Mammary epithelial cell (primary cell): ENCODE measurements at regions of chr10 and their contacts with region 1.

Region 1: DNA sequence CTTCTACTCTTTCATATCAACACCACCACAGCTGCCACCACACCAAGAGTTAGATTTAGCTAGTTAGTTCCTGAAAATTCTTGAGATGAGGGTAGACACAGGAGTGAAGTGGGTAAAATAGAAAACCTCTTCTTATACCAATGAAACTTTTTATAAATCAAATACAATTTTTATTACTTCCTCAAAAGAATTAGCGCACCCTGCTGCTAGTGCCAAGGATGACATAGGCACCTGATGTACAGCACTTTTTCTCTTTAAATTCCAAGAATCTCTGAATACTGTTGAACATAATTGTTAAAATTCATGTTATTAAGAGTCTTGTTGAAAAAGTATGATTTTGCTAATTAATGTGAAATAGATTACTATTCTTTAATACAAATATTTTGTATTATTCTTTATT is 11.4 kb downstream of the ZWINT start:
- DNase-seq: no peak
- H3K4me3 ChIP-seq: no peak overlapping the region
- H3K27ac ChIP-seq: no peak overlapping the region
- H3K4me1 ChIP-seq: no peaks in the 10 kb centered on the region
- H3K27me3 ChIP-seq: no peaks in the 10 kb centered on the region
- CTCF ChIP-seq: peak; percentile 23 to 58

Region 2: DNA sequence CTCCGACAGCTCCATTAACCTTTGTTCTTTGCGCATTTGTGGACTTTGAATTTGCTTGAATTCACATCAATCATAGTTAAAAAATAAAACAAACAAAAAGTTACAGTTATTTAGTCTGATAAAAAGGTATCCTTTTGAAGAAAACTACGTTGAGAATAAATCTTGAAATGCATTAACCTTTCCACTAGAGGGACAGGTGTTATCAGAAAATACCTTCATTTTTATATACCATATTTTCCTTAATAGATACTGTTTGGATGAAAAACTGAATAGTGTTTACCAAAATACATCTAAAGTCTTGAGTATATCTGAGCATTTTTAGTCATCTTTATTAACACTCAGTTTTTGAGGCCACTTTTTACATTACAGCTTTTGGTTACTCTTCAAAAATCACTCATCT is 360.4 kb before region 1 on chr10:
- CTCF ChIA-PET with region 1: no interaction called
- dilution Hi-C with region 1: no loop called
- in situ Hi-C with region 1: no loop called
- intact Hi-C with region 1: loop called (anchors 10 kb)
- DNase-seq: no peak
- H3K4me3 ChIP-seq: no peak overlapping the region
- H3K27ac ChIP-seq: no peak overlapping the region
- H3K4me1 ChIP-seq: no peaks in the 10 kb centered on the region
- H3K27me3 ChIP-seq: no peaks in the 10 kb centered on the region
- CTCF ChIP-seq: peak; percentile 7 to 15

Region 3: DNA sequence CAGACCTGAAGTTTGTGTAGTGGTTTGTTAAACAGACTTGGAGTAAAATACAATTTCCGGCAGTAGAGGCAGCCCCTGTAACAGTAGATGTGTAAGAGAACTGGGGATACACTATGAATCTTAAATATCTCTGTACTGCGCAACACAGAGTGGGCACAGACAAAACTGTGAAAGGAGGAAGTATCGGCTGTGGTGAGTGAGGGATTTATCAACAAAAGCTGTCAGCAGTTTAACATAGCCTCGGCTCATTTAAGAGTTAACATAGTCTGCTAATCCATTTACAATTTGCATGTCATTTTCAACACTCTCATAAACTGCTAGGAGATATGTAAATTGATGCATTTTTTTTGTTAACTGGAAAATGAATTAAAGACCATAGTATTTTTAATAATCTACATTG is 213.8 kb before region 1 on chr10:
- CTCF ChIA-PET with region 1: interaction called, 11 read pairs
- dilution Hi-C with region 1: no loop called
- in situ Hi-C with region 1: no loop called
- intact Hi-C with region 1: no loop called
- DNase-seq: no peak
- H3K4me3 ChIP-seq: no peak overlapping the region
- H3K27ac ChIP-seq: no peak overlapping the region
- H3K4me1 ChIP-seq: no peaks in the 10 kb centered on the region
- H3K27me3 ChIP-seq: no peaks in the 10 kb centered on the region
- CTCF ChIP-seq: no peak

Region 4: GRCh38 chr10:56633876-56634452 is 284.4 kb after region 1 on chr10:
- CTCF ChIA-PET with region 1: no interaction called
- dilution Hi-C with region 1: no loop called
- in situ Hi-C with region 1: no loop called
- intact Hi-C with region 1: no loop called
- DNase-seq: no peak
- H3K4me3 ChIP-seq: no peak overlapping the region
- H3K27ac ChIP-seq: no peak overlapping the region
- H3K4me1 ChIP-seq: no peaks in the 10 kb centered on the region
- H3K27me3 ChIP-seq: no peaks in the 10 kb centered on the region
- CTCF ChIP-seq: no peak

Region 5: GRCh38 chr10:56653289-56653688 is 303.7 kb after region 1 on chr10:
- CTCF ChIA-PET with region 1: no interaction called
- dilution Hi-C with region 1: no loop called
- in situ Hi-C with region 1: no loop called
- intact Hi-C with region 1: no loop called
- DNase-seq: peak; percentile 9
- H3K4me3 ChIP-seq: no peak overlapping the region
- H3K27ac ChIP-seq: no peak overlapping the region
- H3K4me1 ChIP-seq: peaks cover 3% of the 10 kb centered on the region
- H3K27me3 ChIP-seq: peaks cover 2% of the 10 kb centered on the region
- CTCF ChIP-seq: no peak